Dendritic cell treated with granulocyte-macrophage colony-stimulating factor and Interleukin-4, amounts not matched to agents 40 ng/mL and 50 ng/mL, for 4 days (primary cell): ENCODE measurements at regions of chr17 and their contacts with region 1.

Region 1: GRCh38 chr17:42527273-42527703 is 8.8 kb upstream of the NAGLU start:
- H3K4me3 Mint-ChIP-seq: no peak overlapping the region
- H3K27ac Mint-ChIP-seq: no peak overlapping the region
- H3K4me1 Mint-ChIP-seq: peaks cover 43% of the 10 kb centered on the region
- H3K27me3 Mint-ChIP-seq: peaks cover 6% of the 10 kb centered on the region

Region 2: DNA sequence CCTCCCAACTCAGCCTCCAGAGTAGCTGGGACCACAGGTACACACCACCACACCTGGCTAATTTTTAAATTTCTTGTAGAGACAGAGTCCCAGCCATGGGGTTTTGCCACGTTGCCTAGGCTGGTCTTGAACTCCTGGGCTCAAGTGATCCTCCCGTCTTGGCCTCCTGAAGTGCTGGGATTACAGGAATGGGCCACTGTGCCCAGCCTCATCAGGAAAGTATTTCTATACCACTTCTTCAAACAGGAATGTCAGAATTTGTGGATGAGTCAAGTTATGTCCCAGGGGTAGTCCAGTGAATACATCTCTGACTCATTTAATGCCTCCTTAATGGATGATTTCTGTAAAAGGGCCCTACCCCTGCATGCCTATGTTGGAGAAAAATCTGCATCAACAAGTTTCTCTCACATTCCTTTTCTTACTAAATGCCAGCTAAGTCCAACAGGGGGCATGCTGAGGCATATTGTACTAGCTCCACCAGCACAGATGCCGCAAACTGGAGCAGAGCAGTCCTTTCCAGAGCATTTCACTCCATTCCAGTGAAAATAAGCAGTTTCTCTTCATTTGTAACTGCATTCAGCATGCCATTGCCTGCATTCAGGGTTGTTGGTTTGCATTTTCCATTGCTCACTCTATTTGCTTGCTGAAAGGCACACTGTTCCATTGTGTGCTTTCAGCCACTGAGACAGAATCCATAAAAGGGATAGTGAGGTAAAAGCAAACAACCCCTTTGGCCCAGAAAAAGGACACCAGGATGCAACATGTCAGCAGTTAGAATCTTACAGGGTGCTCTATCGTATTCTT is 98.9 kb before region 1 on chr17:
- intact Hi-C with region 1: loop called (anchors 1 kb)
- H3K4me3 Mint-ChIP-seq: no peak overlapping the region
- H3K27ac Mint-ChIP-seq: no peak overlapping the region
- H3K4me1 Mint-ChIP-seq: no peaks in the 10 kb centered on the region
- H3K27me3 Mint-ChIP-seq: peaks cover 44% of the 10 kb centered on the region

Region 3: DNA sequence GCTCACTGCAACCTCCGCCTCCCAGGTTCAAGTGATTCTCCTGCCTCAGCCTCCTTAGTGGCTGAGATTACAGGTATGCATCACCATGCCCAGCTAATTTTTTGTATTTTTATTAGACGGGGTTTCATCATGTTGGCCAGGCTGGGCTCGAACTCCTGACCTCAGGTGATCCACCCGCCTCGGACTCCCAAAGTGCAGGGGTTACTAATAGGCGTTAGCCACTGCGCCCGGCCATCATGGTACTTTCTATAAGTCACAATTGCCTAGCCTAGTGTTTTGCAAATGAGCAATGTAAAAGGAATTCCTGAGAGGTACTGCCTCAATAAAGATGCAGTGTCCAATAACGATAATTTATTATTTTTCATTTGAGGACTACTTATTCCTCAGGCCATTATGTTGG is 64.1 kb after region 1 on chr17:
- intact Hi-C with region 1: no loop called
- H3K4me3 Mint-ChIP-seq: no peak overlapping the region
- H3K27ac Mint-ChIP-seq: no peak overlapping the region
- H3K4me1 Mint-ChIP-seq: peaks cover 8% of the 10 kb centered on the region
- H3K27me3 Mint-ChIP-seq: no peaks in the 10 kb centered on the region

Region 4: GRCh38 chr17:42773290-42774035 is 246.2 kb after region 1 on chr17 and contains the start of gene VPS25:
- intact Hi-C with region 1: no loop called
- H3K4me3 Mint-ChIP-seq: peak within 1 kb of the TSS; percentile 99
- H3K27ac Mint-ChIP-seq: peak within 1 kb of the TSS; percentile 92
- H3K4me1 Mint-ChIP-seq: peaks cover 37% of the 10 kb centered on the region
- H3K27me3 Mint-ChIP-seq: peaks cover 8% of the 10 kb centered on the region